ENCODE measurements at regions of chr17 and their contacts with region 1.

Region 1: GRCh38 chr17:40075201-40075941 is 12.6 kb downstream of the THRA start:
- DNase-seq: peak; percentile 50
- H3K4me3 Mint-ChIP-seq: no peak overlapping the region
- H3K27ac Mint-ChIP-seq: no peak overlapping the region
- H3K4me1 Mint-ChIP-seq: peaks cover 11% of the 10 kb centered on the region
- H3K27me3 Mint-ChIP-seq: peaks cover 3% of the 10 kb centered on the region

Region 2: GRCh38 chr17:39972271-39972670 is 103.1 kb before region 1 on chr17:
- intact Hi-C with region 1: no loop called
- DNase-seq: no peak
- H3K4me3 Mint-ChIP-seq: no peak overlapping the region
- H3K27ac Mint-ChIP-seq: no peak overlapping the region
- H3K4me1 Mint-ChIP-seq: no peaks in the 10 kb centered on the region
- H3K27me3 Mint-ChIP-seq: peaks cover 20% of the 10 kb centered on the region

Region 3: GRCh38 chr17:40041196-40041595 is 34.2 kb before region 1 on chr17:
- intact Hi-C with region 1: no loop called
- DNase-seq: no peak
- H3K4me3 Mint-ChIP-seq: no peak overlapping the region
- H3K27ac Mint-ChIP-seq: no peak overlapping the region
- H3K4me1 Mint-ChIP-seq: no peaks in the 10 kb centered on the region
- H3K27me3 Mint-ChIP-seq: no peaks in the 10 kb centered on the region

Region 4: GRCh38 chr17:40062329-40063186 is 12.8 kb before region 1 on chr17 and contains the start of gene THRA:
- intact Hi-C with region 1: loop called (anchors 1 kb)
- DNase-seq: peak; percentile 54
- H3K4me3 Mint-ChIP-seq: peak within 1 kb of the TSS; percentile 86
- H3K27ac Mint-ChIP-seq: peak within 1 kb of the TSS; percentile 29
- H3K4me1 Mint-ChIP-seq: peaks cover 33% of the 10 kb centered on the region
- H3K27me3 Mint-ChIP-seq: peaks cover 43% of the 10 kb centered on the region
- total RNA-seq, gene THRA: 2.9 and 3.5 TPM in 2 replicates

Region 5: DNA sequence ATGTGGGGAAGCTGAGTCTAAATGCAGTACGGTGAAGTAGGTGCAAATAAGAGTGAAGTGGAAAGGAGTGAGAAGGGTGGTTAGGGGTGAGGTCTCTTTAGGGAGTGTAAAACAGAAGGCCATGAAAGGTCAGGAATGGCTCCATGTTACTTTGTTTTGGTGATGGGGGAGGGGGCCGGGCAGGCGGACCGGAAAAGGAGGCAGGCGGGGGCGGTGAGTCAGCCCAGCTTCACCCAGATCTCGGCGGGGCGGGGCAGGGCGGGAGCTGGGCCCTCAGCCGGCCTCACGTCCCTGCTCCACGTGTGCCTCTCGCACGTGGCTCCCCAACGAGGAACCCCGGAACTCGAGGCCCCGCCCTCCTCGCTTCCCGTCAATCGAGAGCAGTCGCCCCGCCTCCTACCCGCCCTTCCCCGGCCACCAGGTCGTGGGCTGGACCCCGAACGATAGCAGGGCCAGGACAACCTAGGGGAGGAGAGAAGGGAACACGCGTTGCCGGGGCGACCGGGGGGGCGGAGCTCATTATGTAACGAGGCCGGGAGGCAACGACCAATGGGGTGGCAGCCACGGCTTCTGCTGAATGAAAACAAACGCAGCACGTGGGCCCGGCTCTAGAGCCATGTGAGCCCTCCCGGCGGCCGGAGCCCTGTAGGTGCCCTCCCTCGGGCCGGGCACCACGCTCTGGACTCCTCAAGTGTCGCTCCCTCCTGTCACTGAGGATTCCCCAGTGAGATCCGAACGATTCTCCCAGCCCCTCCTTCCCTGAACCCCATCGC is 23.7 kb after region 1 on chr17:
- intact Hi-C with region 1: no loop called
- DNase-seq: peak; percentile 86
- H3K4me3 Mint-ChIP-seq: peak overlapping the region; percentile 92
- H3K27ac Mint-ChIP-seq: peak overlapping the region; percentile 85
- H3K4me1 Mint-ChIP-seq: peaks cover 81% of the 10 kb centered on the region
- H3K27me3 Mint-ChIP-seq: peaks cover 11% of the 10 kb centered on the region